Activated CD8-positive, alpha-beta T cell treated with anti-CD3 and anti-CD28 coated beads for 36 hours (primary cell): ENCODE measurements at regions of chr17 and their contacts with region 1.

Region 1: DNA sequence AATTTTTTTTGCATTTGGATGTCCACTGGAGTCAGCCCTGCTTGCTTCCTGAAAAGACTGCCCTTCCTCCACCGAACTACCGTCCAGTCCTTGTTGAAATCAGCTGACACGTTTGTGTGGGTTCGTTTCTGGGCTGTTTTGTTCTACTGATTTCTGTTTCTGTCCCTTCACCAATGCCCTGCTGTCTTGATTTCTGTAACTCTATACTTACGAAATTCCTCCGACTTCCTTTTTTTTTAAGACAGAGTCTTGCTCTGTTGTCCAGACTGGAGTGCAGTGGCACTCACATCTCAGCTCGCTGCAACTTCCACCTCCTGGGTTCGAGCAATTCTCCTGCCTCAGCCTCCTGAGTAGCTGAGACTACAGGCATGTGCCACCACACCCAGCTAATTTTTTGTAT is 8.4 kb upstream of the GAA start:
- DNase-seq: no peak
- ATAC-seq: no peak
- H3K4me3 Mint-ChIP-seq: no peak overlapping the region
- H3K27ac Mint-ChIP-seq: no peak overlapping the region
- H3K4me1 Mint-ChIP-seq: no peaks in the 10 kb centered on the region
- H3K27me3 Mint-ChIP-seq: no peaks in the 10 kb centered on the region
- CTCF ChIP-seq: no peak

Region 2: DNA sequence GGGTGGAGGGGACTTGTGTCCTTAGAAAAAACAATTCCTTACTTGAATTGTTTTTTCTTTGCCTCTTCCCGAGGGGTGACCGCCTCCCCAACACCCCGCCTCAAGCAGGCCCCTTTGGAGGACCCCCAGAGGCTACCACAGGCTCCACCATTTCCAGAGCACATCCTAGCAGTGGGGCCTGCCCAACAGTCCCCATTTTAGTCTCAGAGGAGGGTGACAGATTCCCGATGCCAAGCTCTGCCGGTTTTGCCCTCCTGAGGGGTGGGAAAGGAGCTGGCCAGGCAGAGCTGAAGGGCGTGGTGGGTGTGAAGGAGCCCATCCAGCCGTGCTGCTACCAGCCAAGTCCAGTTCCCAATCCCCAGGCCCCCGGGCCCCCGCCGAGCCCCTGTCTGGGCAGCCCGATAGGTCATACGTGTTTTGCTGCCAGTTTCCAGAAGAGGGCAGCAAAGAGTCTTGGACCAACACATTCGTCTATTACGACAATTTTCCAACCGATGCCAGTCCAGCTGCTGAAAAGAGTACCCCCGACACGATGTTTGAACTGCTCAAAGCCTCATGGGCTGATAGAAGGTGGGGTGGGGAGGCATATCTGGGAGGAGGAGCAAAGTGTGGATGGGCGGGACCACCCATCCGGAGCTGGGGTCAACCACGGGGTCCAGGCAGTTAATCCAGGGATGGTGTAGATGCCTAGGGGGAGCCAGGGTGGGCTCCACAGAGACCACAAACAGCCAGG is 10.4 kb before region 1 on chr17:
- CTCF ChIA-PET with region 1: interaction called, 20 read pairs
- POLR2A ChIA-PET with region 1: no interaction called
- intact Hi-C with region 1: no loop called
- DNase-seq: peak; percentile 79
- ATAC-seq: peak; percentile 91
- H3K4me3 Mint-ChIP-seq: no peak overlapping the region
- H3K27ac Mint-ChIP-seq: peak overlapping the region; percentile 52
- H3K4me1 Mint-ChIP-seq: peaks cover 3% of the 10 kb centered on the region
- H3K27me3 Mint-ChIP-seq: no peaks in the 10 kb centered on the region
- CTCF ChIP-seq: peak; percentile 88

Region 3: DNA sequence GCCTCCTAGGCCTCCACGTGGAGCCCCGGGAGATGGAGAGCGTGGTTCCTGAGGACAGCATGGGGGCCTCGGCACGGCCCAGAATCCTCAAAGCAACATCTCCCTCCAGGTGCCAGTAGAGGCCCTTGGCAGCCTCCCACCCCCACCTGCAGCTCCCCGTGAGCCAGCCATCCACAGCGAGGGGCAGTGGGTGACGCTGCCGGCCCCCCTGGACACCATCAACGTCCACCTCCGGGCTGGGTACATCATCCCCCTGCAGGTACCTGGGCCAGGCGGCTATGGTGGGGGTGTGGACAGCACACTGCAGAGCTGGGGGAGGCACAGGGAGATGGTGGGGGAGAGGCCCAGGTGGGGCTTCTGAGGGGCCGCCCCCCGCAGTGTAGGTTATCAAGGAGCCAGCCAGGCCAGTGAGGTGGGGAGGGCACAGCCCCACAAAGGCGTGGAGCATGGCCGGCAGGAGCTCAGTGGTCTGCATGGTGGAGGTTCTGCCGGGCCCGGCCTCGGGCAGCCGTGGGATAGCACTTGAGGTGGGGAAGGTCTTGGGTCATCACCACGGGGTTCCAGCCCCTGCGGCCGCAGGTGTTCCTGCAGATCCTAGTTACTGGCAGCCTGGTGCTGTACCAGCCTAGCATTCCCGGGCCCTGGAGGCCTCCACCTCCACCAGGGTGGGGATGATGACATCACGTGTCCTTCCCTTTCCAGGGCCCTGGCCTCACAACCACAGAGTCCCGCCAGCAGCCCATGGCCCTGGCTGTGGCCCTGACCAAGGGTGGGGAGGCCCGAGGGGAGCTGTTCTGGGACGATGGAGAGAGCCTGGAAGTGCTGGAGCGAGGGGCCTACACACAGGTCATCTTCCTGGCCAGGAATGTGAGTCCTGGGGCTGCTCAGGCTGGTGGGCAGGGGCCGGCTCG is 24.8 kb after region 1 on chr17:
- CTCF ChIA-PET with region 1: no interaction called
- POLR2A ChIA-PET with region 1: no interaction called
- intact Hi-C with region 1: no loop called
- DNase-seq: no peak
- ATAC-seq: no peak
- H3K4me3 Mint-ChIP-seq: no peak overlapping the region
- H3K27ac Mint-ChIP-seq: no peak overlapping the region
- H3K4me1 Mint-ChIP-seq: no peaks in the 10 kb centered on the region
- H3K27me3 Mint-ChIP-seq: no peaks in the 10 kb centered on the region
- CTCF ChIP-seq: no peak